ENCODE measurements at regions of chr13 and their contacts with region 1.

Region 1: DNA sequence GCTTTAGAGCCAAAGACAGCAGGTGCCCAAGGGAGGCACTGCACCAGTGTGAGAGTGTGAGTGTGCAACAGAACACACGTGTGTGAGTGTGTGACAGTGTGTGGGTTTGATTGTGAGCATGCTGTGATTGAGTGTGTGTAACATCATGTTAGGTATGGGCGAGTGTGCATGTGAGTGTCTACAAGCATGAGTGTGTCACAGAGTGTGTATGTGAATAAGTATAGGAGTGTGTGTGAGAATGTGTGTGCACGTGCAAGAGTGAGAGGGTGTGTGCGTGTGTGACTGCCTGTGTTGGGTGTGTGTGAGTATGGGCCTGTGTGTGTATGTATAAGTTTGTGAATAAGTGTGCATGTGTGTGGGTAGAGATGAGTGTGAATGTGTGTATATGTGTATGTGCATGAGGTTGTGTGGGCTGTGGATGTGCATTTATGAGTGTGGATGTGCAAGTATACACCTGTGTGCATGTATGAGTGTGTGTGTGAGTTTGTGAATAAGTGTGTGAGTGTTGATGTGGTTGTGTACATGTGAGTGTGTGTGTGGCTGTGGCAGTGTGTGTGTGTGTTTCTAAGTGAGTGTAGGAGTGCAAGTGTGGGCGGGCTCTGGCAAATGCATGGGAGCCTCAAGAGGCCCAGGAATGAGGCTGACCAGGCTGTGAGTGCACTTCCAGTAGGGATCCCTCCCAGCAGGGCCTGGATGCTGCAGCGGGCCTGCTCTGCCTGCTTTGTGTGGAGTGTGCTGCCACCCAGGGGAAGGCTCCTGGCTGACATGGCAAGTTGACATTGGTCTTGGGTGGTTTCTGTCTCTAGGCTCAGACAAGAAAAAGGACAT is 198.4 kb downstream of the COL4A1 start:
- DNase-seq: peak; percentile 86 to 93 (median 90)
- ATAC-seq: peak; percentile 93 to 94
- H3K4me3 ChIP-seq: no peak overlapping the region
- H3K27ac ChIP-seq: no peak overlapping the region
- H3K4me1 ChIP-seq: peaks cover 2% of the 10 kb centered on the region
- H3K27me3 ChIP-seq: no peaks in the 10 kb centered on the region

Region 2: DNA sequence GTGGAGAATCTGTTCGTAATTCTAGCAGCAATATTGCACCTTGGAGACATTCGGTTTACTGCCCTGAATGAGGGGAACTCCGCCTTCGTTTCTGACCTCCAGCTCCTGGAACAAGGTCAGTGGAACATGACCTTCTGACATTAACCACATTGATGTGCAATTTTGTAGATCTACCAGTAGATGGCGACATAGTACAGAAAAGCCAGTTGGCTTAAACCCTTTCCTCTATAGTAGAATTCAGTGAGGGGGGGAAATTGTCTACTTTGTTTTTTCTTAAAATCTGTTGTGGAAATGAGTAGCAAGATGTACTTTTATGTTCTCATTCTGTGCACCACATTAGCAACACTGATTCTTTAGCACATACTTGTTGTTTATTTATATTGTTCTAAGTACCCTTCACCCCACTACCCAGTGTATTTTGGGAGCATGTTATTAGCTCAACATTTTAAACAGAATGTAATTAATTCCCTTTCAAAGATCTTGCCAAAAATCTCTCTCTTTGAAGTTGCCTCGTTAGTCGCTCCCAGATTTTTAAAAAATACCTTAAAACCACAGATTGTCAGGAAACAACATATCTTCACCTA is 1146.9 kb before region 1 on chr13:
- intact Hi-C with region 1: loop called in 3 of 4 experiments (anchors 10 kb)
- DNase-seq: no peak
- ATAC-seq: peak; percentile 66 to 80
- H3K4me3 ChIP-seq: no peak overlapping the region
- H3K27ac ChIP-seq: no peak overlapping the region
- H3K4me1 ChIP-seq: no peaks in the 10 kb centered on the region
- H3K27me3 ChIP-seq: no peaks in the 10 kb centered on the region

Region 3: GRCh38 chr13:109145631-109146030 is 962.9 kb before region 1 on chr13:
- intact Hi-C with region 1: loop called in 2 of 4 experiments (anchors 10 kb)
- DNase-seq: peak in 1 of 3 donors; percentile 47
- ATAC-seq: peak; percentile 84 to 88
- H3K4me3 ChIP-seq: no peak overlapping the region
- H3K27ac ChIP-seq: no peak overlapping the region
- H3K4me1 ChIP-seq: no peaks in the 10 kb centered on the region
- H3K27me3 ChIP-seq: no peaks in the 10 kb centered on the region

Region 4: DNA sequence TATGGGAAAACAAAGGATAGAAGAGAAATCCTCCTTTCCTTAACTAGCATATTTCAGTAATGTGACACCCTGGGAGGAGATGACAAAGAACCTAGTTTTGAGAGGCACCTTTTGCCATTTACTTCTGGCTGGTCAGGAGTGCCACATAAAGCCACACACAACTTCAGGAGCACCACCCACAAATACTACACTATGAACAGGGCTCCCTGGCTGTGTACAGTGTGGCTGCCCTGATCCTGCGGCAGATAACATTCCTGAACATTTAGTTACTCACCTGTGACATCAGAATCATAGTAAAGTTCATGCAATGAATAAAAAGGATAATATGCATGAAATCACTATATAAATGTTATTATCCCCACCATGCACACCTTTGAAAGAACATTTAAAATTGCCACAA is 304.7 kb before region 1 on chr13:
- intact Hi-C with region 1: no loop called
- DNase-seq: no peak
- ATAC-seq: no peak
- H3K4me3 ChIP-seq: no peak overlapping the region
- H3K27ac ChIP-seq: no peak overlapping the region
- H3K4me1 ChIP-seq: no peaks in the 10 kb centered on the region
- H3K27me3 ChIP-seq: no peaks in the 10 kb centered on the region

Region 5: GRCh38 chr13:109869312-109870237 is 239.0 kb before region 1 on chr13:
- intact Hi-C with region 1: loop called in 2 of 4 experiments (anchors 5 to 10 kb)
- DNase-seq: peak; percentile 87 to 95 (median 93)
- ATAC-seq: peak; percentile 92 to 94
- H3K4me3 ChIP-seq: peak overlapping the region; percentile 41
- H3K27ac ChIP-seq: peak overlapping the region; percentile 63
- H3K4me1 ChIP-seq: peaks cover 6% of the 10 kb centered on the region
- H3K27me3 ChIP-seq: no peaks in the 10 kb centered on the region

Region 6: GRCh38 chr13:110426735-110427134 is 318.2 kb after region 1 on chr13:
- intact Hi-C with region 1: no loop called
- DNase-seq: no peak
- ATAC-seq: peak in 1 of 2 donors; percentile 46
- H3K4me3 ChIP-seq: no peak overlapping the region
- H3K27ac ChIP-seq: no peak overlapping the region
- H3K4me1 ChIP-seq: peaks cover 8% of the 10 kb centered on the region
- H3K27me3 ChIP-seq: no peaks in the 10 kb centered on the region